HCT116 (cell line): ENCODE measurements at regions of chrX and their contacts with region 1.

Region 1: GRCh38 chrX:49915361-49916222 is 6.8 kb upstream of the CLCN5 start:
- DNase-seq: peak; percentile 40
- ATAC-seq: peak; percentile 90
- H3K4me3 ChIP-seq: no peak overlapping the region
- H3K27ac ChIP-seq: no peak overlapping the region
- H3K4me1 ChIP-seq: no peaks in the 10 kb centered on the region
- H3K27me3 ChIP-seq: no peaks in the 10 kb centered on the region
- CTCF ChIP-seq: peak; percentile 67 to 80 (median 75); a peak in 5 of 6 replicates
- POLR2A ChIP-seq: no peak
- RAD21 ChIP-seq: peak; percentile 70

Region 2: GRCh38 chrX:49637686-49638085 is 277.9 kb before region 1 on chrX:
- CTCF ChIA-PET with region 1: no interaction called
- POLR2A ChIA-PET with region 1: no interaction called
- RAD21 ChIA-PET with region 1: no interaction called
- intact Hi-C with region 1: no loop called
- DNase-seq: no peak
- ATAC-seq: no peak
- H3K4me3 ChIP-seq: no peak overlapping the region
- H3K27ac ChIP-seq: no peak overlapping the region
- H3K4me1 ChIP-seq: no peaks in the 10 kb centered on the region
- H3K27me3 ChIP-seq: peaks cover 10% of the 10 kb centered on the region; the same call in 1 of the 2 replicates
- CTCF ChIP-seq: no peak
- POLR2A ChIP-seq: no peak
- RAD21 ChIP-seq: no peak; the same call in 1 of the 2 replicates

Region 3: GRCh38 chrX:49784747-49785280 is 130.8 kb before region 1 on chrX:
- CTCF ChIA-PET with region 1: no interaction called
- POLR2A ChIA-PET with region 1: no interaction called
- RAD21 ChIA-PET with region 1: no interaction called
- intact Hi-C with region 1: no loop called
- DNase-seq: no peak
- ATAC-seq: no peak
- H3K4me3 ChIP-seq: no peak overlapping the region
- H3K27ac ChIP-seq: no peak overlapping the region
- H3K4me1 ChIP-seq: no peaks in the 10 kb centered on the region
- H3K27me3 ChIP-seq: 0 out of 2 replicates have a peak, but pooled peaks cover 4% of the 10 kb centered on the region
- CTCF ChIP-seq: no peak
- POLR2A ChIP-seq: no peak
- RAD21 ChIP-seq: no peak

Region 4: DNA sequence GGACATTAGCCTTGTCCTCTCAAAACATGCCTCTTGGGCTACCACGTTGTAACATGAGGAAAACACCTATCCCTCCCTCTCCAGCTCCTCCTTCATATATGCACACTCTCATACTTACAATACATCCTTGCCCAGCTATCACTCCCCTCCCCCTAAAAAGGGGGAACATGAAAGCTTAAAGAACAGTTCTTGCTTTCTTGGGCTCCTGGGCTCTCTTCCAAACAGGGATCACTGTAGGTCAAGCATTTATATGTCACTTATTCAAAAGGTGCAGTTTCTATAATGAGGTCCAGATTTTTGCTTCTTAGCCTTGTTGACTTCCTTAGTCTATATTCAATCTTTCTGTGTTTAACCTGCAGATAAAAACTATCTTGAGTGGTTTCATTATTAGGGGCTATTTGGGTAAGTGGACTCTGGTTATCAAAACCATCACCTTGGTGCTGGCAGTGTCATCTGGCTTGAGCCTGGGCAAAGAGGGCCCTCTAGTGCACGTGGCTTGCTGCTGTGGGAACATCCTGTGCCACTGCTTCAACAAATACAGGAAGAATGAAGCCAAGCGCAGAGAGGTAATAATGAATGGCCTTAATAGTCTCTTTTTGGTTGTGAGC is 165.8 kb after region 1 on chrX:
- CTCF ChIA-PET with region 1: interaction called, 3 read pairs
- POLR2A ChIA-PET with region 1: no interaction called
- RAD21 ChIA-PET with region 1: no interaction called
- intact Hi-C with region 1: loop called (anchors 1 kb)
- DNase-seq: no peak
- ATAC-seq: peak; percentile 55; the same call in 1 of the 2 replicates
- H3K4me3 ChIP-seq: no peak overlapping the region
- H3K27ac ChIP-seq: no peak overlapping the region
- H3K4me1 ChIP-seq: no peaks in the 10 kb centered on the region
- H3K27me3 ChIP-seq: no peaks in the 10 kb centered on the region
- CTCF ChIP-seq: peak; percentile 43 to 46 (median 46); a peak in 4 of 6 replicates
- POLR2A ChIP-seq: no peak
- RAD21 ChIP-seq: peak; percentile 67

Region 5: GRCh38 chrX:50456712-50457484 is 541.3 kb after region 1 on chrX:
- CTCF ChIA-PET with region 1: no interaction called
- POLR2A ChIA-PET with region 1: no interaction called
- RAD21 ChIA-PET with region 1: no interaction called
- intact Hi-C with region 1: loop called (anchors 10 kb)
- DNase-seq: no peak
- ATAC-seq: peak; percentile 59
- H3K4me3 ChIP-seq: no peak overlapping the region
- H3K27ac ChIP-seq: no peak overlapping the region
- H3K4me1 ChIP-seq: no peaks in the 10 kb centered on the region
- H3K27me3 ChIP-seq: peaks cover 23% of the 10 kb centered on the region
- CTCF ChIP-seq: peak in 2 of 3 experiments; percentile 30 to 33; a peak in 2 of 6 replicates
- POLR2A ChIP-seq: no peak
- RAD21 ChIP-seq: no peak

Region 6: GRCh38 chrX:50579955-50580354 is 664.4 kb after region 1 on chrX:
- CTCF ChIA-PET with region 1: interaction called, 5 read pairs
- POLR2A ChIA-PET with region 1: no interaction called
- RAD21 ChIA-PET with region 1: no interaction called
- intact Hi-C with region 1: loop called (anchors 5 kb)
- DNase-seq: peak; percentile 59
- ATAC-seq: peak; percentile 88
- H3K4me3 ChIP-seq: no peak overlapping the region
- H3K27ac ChIP-seq: no peak overlapping the region
- H3K4me1 ChIP-seq: no peaks in the 10 kb centered on the region
- H3K27me3 ChIP-seq: peaks cover 3% of the 10 kb centered on the region; the same call in 1 of the 2 replicates
- CTCF ChIP-seq: peak; percentile 23 to 55 (median 33); a peak in 4 of 6 replicates
- POLR2A ChIP-seq: no peak
- RAD21 ChIP-seq: peak; percentile 56

Region 7: GRCh38 chrX:50680990-50681389 is 765.4 kb after region 1 on chrX:
- CTCF ChIA-PET with region 1: no interaction called
- POLR2A ChIA-PET with region 1: no interaction called
- RAD21 ChIA-PET with region 1: no interaction called
- intact Hi-C with region 1: loop called (anchors 10 kb)
- DNase-seq: no peak
- ATAC-seq: no peak
- H3K4me3 ChIP-seq: no peak overlapping the region
- H3K27ac ChIP-seq: no peak overlapping the region
- H3K4me1 ChIP-seq: no peaks in the 10 kb centered on the region
- H3K27me3 ChIP-seq: 0 out of 2 replicates have a peak, but pooled peaks cover 2% of the 10 kb centered on the region
- CTCF ChIP-seq: peak in 2 of 3 experiments; percentile 35 to 41; a peak in 3 of 6 replicates
- POLR2A ChIP-seq: no peak
- RAD21 ChIP-seq: peak; percentile 27; the same call in 1 of the 2 replicates